ENCODE measurements at regions of chr3 and their contacts with region 1.

Region 1: GRCh38 chr3:184250167-184250828 is 826 bp downstream of the EEF1AKMT4 start:
- DNase-seq: peak; percentile 95
- ATAC-seq: peak; percentile 72
- H3K4me3 Mint-ChIP-seq: peak overlapping the region; percentile 98
- H3K27ac Mint-ChIP-seq: peak overlapping the region; percentile 99
- H3K4me1 Mint-ChIP-seq: peaks cover 9% of the 10 kb centered on the region
- H3K27me3 Mint-ChIP-seq: no peaks in the 10 kb centered on the region

Region 2: DNA sequence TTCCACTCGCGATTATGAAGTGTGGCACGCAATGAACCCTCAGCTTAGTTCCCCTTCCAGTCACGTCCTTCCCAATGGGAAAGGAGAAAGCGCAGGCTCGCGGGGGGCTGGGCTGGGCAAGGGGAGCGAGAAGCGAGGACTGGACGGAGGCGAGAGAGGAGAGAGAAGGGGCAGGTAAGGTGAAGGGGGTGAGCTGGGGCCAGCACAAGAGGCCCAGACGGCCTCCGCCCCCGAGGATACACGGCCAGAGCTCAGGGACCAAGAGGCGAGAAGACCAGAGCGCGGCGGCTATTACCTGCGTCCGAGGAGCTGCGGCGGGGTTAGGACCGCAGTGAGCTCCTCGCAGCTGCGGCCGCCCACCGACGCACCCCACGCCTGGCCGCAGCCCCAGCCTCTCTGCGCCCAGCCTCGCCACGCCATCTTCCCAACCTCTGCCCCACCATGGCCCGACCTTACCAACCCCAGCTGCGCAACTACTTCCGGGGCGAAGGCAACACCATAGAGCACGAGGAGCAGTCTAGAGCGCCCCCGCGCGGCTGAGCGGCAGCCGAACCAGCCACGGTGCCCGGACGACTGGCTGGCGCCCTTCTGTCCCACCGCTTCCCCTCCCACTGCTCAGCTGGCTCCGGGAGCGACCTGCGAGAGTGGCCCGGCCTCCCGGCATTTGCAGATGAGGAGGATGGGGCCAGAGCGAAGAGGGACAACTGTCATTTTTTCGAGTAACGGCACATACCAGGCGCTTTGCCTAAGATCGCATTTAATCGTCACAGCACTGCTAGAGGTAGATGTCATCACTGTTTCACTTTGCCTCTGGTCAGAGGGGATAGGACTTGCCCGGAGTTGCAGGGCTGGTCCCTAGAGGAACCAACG is 365.6 kb before region 1 on chr3 and contains the start of gene PARL:
- CTCF ChIA-PET with region 1: interaction called, 8 read pairs
- POLR2A ChIA-PET with region 1: interaction called, 3 read pairs
- intact Hi-C with region 1: loop called in 1 of 2 experiments (anchors 1 kb)
- DNase-seq: peak; percentile 98
- ATAC-seq: peak; percentile 100
- H3K4me3 Mint-ChIP-seq: peak within 1 kb of the TSS; percentile 94
- H3K27ac Mint-ChIP-seq: peak within 1 kb of the TSS; percentile 94
- H3K4me1 Mint-ChIP-seq: peaks cover 32% of the 10 kb centered on the region
- H3K27me3 Mint-ChIP-seq: no peaks in the 10 kb centered on the region
- total RNA-seq, gene PARL: 55.9 to 91.9 TPM

Region 3: DNA sequence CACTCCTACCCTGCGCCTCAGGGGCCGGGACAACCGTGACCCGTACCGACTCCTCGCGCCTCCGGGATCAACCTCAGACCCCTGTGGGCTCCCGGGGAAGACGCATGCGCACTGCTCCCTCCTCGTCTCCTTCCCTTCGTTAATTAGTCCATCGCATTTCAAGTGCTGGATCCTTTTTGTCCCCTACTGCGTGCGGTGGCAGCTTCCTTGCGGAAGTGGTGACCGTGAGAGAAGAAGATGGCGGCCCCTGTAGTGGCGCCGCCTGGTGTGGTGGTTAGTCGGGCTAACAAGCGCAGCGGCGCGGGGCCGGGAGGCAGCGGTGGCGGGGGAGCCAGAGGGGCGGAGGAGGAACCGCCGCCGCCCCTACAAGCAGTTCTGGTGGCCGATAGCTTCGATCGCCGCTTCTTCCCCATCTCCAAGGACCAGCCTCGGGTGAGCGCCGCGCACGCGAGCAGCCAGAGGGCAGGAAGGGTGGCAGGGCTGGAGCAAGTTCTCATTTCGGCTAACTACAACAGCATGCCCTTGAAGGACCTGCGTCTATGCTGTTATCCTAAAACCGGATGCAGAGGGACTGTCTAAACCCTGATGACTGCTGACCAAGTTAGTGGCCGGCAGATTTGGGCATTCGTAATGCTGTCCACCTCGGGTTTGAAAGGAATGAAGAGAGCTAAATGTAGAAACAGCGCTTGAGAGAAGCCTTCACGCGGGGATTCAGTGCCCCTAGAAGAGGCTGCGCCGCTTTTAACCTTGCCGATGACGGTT is 115.0 kb before region 1 on chr3 and contains the start of gene EIF2B5:
- CTCF ChIA-PET with region 1: no interaction called
- POLR2A ChIA-PET with region 1: no interaction called
- intact Hi-C with region 1: loop called (anchors 1 kb)
- DNase-seq: peak; percentile 93
- ATAC-seq: peak; percentile 90
- H3K4me3 Mint-ChIP-seq: peak within 1 kb of the TSS; percentile 97
- H3K27ac Mint-ChIP-seq: peak within 1 kb of the TSS; percentile 92
- H3K4me1 Mint-ChIP-seq: peaks cover 29% of the 10 kb centered on the region
- H3K27me3 Mint-ChIP-seq: no peaks in the 10 kb centered on the region
- total RNA-seq, gene EIF2B5: 46.4 to 60.6 TPM

Region 4: GRCh38 chr3:184185461-184186308 is 64.6 kb before region 1 on chr3 and contains the start of gene ABCF3:
- CTCF ChIA-PET with region 1: interaction called, 7 read pairs
- POLR2A ChIA-PET with region 1: no interaction called
- intact Hi-C with region 1: loop called (anchors 1 kb)
- DNase-seq: peak; percentile 100
- ATAC-seq: peak; percentile 95
- H3K4me3 Mint-ChIP-seq: peak within 1 kb of the TSS; percentile 99
- H3K27ac Mint-ChIP-seq: peak within 1 kb of the TSS; percentile 93
- H3K4me1 Mint-ChIP-seq: peaks cover 32% of the 10 kb centered on the region
- H3K27me3 Mint-ChIP-seq: no peaks in the 10 kb centered on the region
- total RNA-seq, gene ABCF3: 58.2 to 66.2 TPM

Region 5: GRCh38 chr3:184289426-184289938 is 39.2 kb after region 1 on chr3:
- CTCF ChIA-PET with region 1: interaction called, 10 read pairs
- POLR2A ChIA-PET with region 1: interaction called, 3 read pairs
- intact Hi-C with region 1: loop called in 1 of 2 experiments (anchors 1 kb)
- DNase-seq: peak; percentile 85
- ATAC-seq: peak; percentile 87
- H3K4me3 Mint-ChIP-seq: no peak overlapping the region
- H3K27ac Mint-ChIP-seq: no peak overlapping the region
- H3K4me1 Mint-ChIP-seq: no peaks in the 10 kb centered on the region
- H3K27me3 Mint-ChIP-seq: peaks cover 9% of the 10 kb centered on the region

Region 6: DNA sequence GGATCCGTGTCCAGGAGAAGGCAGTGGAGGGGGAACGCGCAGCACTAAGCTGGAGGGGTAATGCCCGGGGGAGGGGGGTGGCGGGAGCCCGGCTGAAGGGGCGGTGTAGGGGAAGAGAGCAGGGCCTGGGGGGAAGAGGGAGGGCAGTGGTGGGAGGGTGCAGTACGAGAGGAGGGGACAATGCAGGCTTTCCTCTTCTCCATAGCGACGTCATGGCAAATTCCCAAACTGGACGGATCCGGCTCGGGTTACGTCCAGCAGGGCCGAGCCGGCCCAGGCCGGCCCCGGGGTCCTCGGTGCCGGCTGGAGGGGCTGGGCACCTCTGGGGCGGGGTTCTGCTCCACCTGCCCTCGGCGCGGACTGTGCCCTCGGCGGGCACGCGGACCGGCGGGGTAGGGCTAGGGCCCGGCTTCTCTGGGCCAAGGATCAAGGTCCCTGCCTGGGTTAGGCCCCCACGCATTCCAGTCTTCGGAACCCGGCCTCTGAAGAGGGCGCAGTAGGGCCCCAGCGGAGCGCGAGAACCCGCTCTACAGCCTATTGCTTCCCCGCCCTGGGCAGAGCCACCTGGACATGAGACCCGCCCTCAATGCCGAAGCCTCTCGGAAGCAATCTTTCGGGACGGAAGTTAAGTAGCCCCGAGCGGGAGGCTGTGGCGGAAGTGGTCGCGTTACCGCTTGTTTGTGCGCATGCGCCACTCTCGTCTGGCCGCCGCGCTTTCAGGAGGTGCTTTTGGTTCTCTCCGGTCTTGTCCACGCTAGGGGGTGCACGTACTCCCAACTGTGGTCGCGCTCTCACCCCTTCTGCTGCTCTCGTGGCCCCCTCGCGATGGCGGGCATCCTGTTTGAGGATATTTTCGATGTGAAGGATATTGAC is 112.6 kb after region 1 on chr3:
- CTCF ChIA-PET with region 1: no interaction called
- POLR2A ChIA-PET with region 1: no interaction called
- intact Hi-C with region 1: loop called (anchors 1 to 2 kb)
- DNase-seq: peak; percentile 97
- ATAC-seq: peak; percentile 91
- H3K4me3 Mint-ChIP-seq: peak overlapping the region; percentile 98
- H3K27ac Mint-ChIP-seq: peak overlapping the region; percentile 98
- H3K4me1 Mint-ChIP-seq: peaks cover 30% of the 10 kb centered on the region
- H3K27me3 Mint-ChIP-seq: no peaks in the 10 kb centered on the region

Region 7: GRCh38 chr3:185937689-185938463 is 1687.6 kb after region 1 on chr3 and contains the start of gene TRA2B:
- CTCF ChIA-PET with region 1: no interaction called
- POLR2A ChIA-PET with region 1: no interaction called
- intact Hi-C with region 1: loop called in 1 of 2 experiments (anchors 5 kb)
- DNase-seq: peak; percentile 100
- ATAC-seq: peak; percentile 90
- H3K4me3 Mint-ChIP-seq: peak within 1 kb of the TSS; percentile 97
- H3K27ac Mint-ChIP-seq: peak within 1 kb of the TSS; percentile 100
- H3K4me1 Mint-ChIP-seq: peaks cover 23% of the 10 kb centered on the region
- H3K27me3 Mint-ChIP-seq: no peaks in the 10 kb centered on the region
- total RNA-seq, gene TRA2B: 228 to 344 TPM